SK-N-SH (cell line): ENCODE measurements at regions of chr6 and their contacts with region 1.

Region 1: DNA sequence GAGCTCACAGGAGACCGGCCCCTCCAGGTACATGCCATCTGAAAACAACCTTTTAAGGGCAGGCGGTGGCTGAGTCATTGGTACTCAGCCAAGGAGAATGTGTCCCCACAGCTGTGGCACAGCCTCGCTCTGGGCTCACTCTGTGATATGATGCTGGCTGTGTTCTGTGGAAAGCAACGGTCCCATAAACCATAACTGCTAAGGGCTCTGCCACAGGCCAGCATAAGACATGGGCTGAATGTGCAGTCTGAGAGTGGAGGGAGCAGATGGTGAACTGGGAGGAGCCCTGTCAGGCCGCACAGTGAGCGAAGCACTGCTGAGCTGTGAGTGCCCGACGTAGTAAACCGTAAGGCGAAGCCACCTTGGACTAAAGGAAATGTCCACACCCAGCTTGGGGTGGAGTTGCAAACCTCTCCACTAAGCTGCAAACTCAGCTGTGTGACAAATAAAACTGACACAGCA is 375.8 kb downstream of the THBS2 start:
- DNase-seq: no peak
- H3K4me3 ChIP-seq: no peak overlapping the region
- H3K27ac ChIP-seq: no peak overlapping the region
- H3K4me1 ChIP-seq: peaks cover 0 to 9% of the 10 kb centered on the region in 2 experiments; a peak in 1 of 4 replicates
- H3K27me3 ChIP-seq: no peaks in the 10 kb centered on the region
- CTCF ChIP-seq: no peak
- EP300 ChIP-seq: no peak
- RAD21 ChIP-seq: no peak

Region 2: GRCh38 chr6:168616816-168617765 is 260.8 kb before region 1 on chr6:
- CTCF ChIA-PET with region 1: interaction called, 15 read pairs
- POLR2A ChIA-PET with region 1: no interaction called
- DNase-seq: peak; percentile 70
- H3K4me3 ChIP-seq: no peak overlapping the region
- H3K27ac ChIP-seq: no peak overlapping the region
- H3K4me1 ChIP-seq: no peaks in the 10 kb centered on the region; a peak in 1 of 4 replicates
- H3K27me3 ChIP-seq: no peaks in the 10 kb centered on the region
- CTCF ChIP-seq: no peak
- EP300 ChIP-seq: no peak
- RAD21 ChIP-seq: peak; percentile 67

Region 3: DNA sequence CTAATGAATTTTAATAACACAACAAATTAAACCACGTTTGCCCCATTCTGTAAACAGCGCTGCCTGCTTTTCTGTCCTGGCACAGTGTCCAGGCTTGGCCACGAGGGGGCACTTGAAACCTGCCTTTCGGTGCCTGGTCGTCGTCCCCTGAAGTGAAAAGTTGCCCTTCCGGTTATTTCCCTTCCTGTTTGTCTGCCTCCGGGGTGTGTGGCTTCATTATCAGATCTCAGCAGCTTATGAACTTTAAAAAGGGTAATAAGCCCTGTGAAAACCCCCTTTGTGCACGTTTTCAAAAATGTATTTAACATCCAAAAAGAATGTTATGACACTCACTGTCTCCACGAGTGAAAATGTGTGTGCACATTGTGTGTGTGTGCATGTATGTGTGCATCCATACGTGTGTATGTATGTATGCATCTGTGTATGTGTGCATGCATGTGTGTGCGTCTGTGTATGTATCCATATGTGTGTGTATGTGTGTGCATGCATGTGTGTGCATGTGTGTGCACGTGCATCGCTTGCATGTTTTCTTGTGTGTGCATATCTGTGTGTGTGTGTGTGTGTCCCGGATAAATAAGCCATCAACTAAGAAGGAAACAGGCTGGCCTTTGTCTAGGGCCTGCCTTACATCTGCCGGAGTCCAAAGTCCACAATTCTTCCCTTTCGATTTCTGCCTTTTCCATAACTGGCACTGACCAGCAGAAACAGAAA is 17.4 kb after region 1 on chr6:
- CTCF ChIA-PET with region 1: interaction called, 12 read pairs
- POLR2A ChIA-PET with region 1: no interaction called
- DNase-seq: peak; percentile 88
- H3K4me3 ChIP-seq: peak overlapping the region in 1 of 2 experiments; percentile 24; a peak in 1 of 4 replicates
- H3K27ac ChIP-seq: no peak overlapping the region
- H3K4me1 ChIP-seq: peaks cover 0 to 3% of the 10 kb centered on the region in 2 experiments; a peak in 1 of 4 replicates
- H3K27me3 ChIP-seq: no peaks in the 10 kb centered on the region
- CTCF ChIP-seq: peak; percentile 88
- EP300 ChIP-seq: no peak
- RAD21 ChIP-seq: peak; percentile 89